ENCODE measurements at regions of chr3 and their contacts with region 1.

Region 1: DNA sequence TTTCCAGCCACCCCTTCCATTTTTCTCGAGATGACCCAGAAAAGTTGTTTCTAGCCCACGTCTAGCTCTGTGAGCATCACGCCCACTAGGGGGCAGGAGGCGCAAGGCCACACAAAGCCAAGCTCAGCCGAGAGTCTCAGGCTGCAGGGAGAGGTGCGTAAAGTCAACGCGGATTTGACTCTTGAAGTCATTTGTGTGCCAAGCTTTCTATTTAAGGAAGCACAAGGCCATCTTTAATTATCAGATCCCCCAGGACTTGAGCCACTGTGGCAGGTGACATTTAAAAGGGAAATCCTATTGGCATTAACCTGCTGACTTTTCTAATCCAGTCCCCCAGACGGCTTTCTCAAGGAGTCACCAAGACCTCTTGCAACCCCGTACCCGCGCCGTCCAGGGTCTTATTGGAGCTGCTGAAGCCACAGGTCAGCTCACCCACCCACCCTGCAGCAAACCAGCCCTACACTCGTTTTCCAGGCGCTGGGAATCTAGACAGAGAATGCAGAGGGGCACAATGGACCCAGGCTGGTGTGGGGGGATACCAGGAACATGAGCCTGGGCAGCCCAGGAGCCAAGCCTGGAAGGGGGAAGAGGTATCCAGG is 62.1 kb downstream of the CAPN7 start:
- DNase-seq: peak; percentile 92
- ATAC-seq: peak; percentile 78

Region 2: DNA sequence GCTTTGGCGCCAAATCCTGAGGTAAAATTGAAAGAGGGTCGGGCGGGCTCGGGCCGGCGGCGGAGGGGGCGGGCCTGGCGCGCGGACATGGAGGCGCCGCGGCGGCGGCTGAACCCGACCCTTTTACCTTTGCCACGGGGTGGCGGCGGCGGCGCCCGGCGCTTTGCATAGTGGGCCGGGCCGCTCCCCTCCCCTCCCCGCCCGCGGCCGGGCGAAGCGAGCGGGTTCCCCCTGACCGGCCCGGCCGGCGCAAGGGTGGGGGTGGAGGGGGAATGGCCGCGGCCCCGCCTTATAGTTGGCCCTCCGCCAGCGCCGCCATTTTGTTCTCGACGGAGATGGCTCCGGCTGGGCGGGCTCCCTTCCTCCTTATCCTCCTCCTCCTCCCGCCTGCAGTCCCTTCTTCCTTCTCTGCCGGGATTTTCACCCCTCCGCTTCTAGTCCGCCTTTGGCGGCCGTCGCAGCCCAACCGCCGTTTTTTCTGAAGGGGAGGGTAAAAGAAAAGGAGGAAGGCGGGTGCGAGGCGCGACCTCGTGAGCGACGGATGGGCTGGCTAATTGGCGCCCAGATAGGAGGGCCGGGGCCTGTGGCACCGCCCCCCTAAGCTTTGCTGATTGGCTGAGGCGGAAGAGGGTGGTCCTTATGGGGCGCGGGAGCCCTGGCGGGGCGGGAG is 320.1 kb before region 1 on chr3:
- intact Hi-C with region 1: no loop called
- DNase-seq: peak; percentile 98
- ATAC-seq: peak; percentile 97

Region 3: GRCh38 chr3:15098503-15099363 is 169.4 kb before region 1 on chr3 and contains the start of gene RBSN:
- intact Hi-C with region 1: no loop called
- DNase-seq: peak; percentile 98
- ATAC-seq: peak; percentile 72
- total RNA-seq, gene RBSN: 17.8 TPM

Region 4: GRCh38 chr3:15332405-15333098 is 64.4 kb after region 1 on chr3 and contains the start of gene SH3BP5:
- intact Hi-C with region 1: loop called (anchors 5 kb)
- DNase-seq: peak; percentile 88
- ATAC-seq: peak; percentile 89
- total RNA-seq, gene SH3BP5: 9.7 TPM

Region 5: GRCh38 chr3:15405448-15406050 is 137.4 kb after region 1 on chr3:
- intact Hi-C with region 1: loop called (anchors 10 kb)
- DNase-seq: no peak
- ATAC-seq: peak; percentile 65

Region 6: GRCh38 chr3:15676259-15676658 is 408.1 kb after region 1 on chr3:
- intact Hi-C with region 1: no loop called
- DNase-seq: no peak
- ATAC-seq: no peak

Measured in left ventricle myocardium superior (tissue), 1 donor.